ENCODE measurements at regions of chr1 and their contacts with region 1.

Region 1: DNA sequence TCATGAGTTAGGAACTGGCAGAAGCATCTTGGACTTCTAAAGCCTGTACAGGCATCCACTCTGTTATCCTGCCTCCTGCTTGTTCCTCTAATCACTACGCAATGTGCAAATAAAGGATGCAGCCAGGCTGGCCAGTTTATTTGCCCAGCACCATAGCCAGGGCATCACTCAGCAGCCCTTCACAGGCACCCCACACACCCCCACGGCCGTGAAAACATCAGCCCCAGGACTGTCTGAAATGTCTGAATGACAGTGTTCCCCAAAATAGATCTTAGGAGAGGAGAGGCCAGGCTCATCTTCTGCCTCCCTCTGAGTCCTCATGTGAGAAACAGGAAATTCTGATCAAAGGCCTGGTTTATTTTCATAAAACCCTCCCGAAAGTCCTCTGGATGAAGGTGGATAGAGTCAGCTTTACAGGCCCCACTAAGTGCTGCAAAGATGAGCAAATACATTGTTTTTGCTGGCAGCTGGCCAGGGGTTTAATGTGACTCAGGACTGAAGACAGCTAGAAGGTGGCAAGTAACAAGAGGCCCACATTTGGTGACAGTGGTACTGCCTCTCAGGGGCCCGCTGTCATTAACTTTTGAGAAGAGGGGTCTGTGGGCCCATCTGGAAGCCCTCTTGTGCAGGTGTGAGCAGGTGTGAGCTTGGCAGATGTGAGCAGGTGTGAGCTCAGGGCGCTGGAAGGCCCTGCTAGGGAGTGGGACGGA is 32.9 kb downstream of the GRHL3 start:
- DNase-seq: peak; percentile 71
- H3K4me3 Mint-ChIP-seq: peak overlapping the region; percentile 22
- H3K27ac Mint-ChIP-seq: peak overlapping the region; percentile 73
- H3K4me1 Mint-ChIP-seq: peaks cover 37% of the 10 kb centered on the region
- H3K27me3 Mint-ChIP-seq: no peaks in the 10 kb centered on the region

Region 2: GRCh38 chr1:24341260-24341659 is 10.8 kb before region 1 on chr1:
- intact Hi-C with region 1: no loop called
- DNase-seq: no peak
- H3K4me3 Mint-ChIP-seq: no peak overlapping the region
- H3K27ac Mint-ChIP-seq: no peak overlapping the region
- H3K4me1 Mint-ChIP-seq: peaks cover 2% of the 10 kb centered on the region
- H3K27me3 Mint-ChIP-seq: peaks cover 39% of the 10 kb centered on the region

Region 3: GRCh38 chr1:24364975-24365678 is 13.1 kb after region 1 on chr1:
- intact Hi-C with region 1: loop called (anchors 1 kb)
- DNase-seq: peak; percentile 81
- H3K4me3 Mint-ChIP-seq: no peak overlapping the region
- H3K27ac Mint-ChIP-seq: peak overlapping the region; percentile 83
- H3K4me1 Mint-ChIP-seq: peaks cover 27% of the 10 kb centered on the region
- H3K27me3 Mint-ChIP-seq: peaks cover 5% of the 10 kb centered on the region

Region 4: DNA sequence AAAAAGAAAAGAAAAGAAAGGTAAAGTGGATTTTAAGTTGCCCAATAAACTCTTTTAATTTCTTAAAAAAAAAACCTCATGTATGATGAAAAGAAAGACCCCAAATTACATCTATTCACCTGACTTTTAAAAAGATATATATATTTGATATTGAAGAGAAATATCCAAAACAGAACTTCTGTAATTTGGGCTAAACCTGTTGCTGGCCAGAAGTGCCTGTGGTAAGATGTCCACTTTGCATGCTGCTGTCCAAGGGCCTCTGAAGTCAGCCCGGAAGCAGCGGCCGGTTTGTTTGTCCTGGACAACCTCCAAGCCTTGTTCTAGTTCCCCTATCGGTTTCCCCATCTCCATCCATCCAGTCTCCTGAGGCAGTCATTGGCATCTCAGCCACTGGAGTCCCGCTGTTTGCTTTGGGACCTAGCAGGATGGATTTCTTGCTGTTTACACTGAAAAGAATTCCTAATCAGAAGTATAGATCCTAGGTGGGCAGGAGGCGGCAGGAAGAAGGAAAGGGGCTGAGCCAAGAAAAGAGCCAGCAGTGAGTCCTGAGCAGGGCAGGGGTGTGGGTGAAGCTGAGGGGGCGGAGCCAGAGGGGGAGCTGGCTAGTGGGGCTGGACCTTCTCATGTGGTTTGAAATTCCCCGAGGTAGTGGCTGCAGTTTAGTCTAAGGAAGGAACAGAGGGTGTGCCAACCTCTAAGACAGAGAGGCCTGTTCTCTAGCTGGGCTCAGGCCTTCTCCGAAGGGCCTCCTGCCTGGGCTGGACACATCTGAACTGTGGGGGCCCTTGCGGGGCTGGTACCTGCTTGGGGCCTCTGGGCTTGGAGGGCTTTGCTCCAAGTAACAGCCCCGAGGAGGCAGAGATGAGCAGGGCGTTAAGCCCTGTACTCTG is 207.1 kb after region 1 on chr1:
- intact Hi-C with region 1: no loop called
- DNase-seq: no peak
- H3K4me3 Mint-ChIP-seq: no peak overlapping the region
- H3K27ac Mint-ChIP-seq: no peak overlapping the region
- H3K4me1 Mint-ChIP-seq: peaks cover 5% of the 10 kb centered on the region
- H3K27me3 Mint-ChIP-seq: peaks cover 52% of the 10 kb centered on the region

Measured in activated CD4-positive, alpha-beta T cell treated with anti-CD3 and anti-CD28 coated beads, Interleukin-2, amount 10 ng/mL, durations not matched to agents 24 days and 14 days (primary cell).